GM13977 (cell line): ENCODE measurements at regions of chr1 and their contacts with region 1.

Region 1: DNA sequence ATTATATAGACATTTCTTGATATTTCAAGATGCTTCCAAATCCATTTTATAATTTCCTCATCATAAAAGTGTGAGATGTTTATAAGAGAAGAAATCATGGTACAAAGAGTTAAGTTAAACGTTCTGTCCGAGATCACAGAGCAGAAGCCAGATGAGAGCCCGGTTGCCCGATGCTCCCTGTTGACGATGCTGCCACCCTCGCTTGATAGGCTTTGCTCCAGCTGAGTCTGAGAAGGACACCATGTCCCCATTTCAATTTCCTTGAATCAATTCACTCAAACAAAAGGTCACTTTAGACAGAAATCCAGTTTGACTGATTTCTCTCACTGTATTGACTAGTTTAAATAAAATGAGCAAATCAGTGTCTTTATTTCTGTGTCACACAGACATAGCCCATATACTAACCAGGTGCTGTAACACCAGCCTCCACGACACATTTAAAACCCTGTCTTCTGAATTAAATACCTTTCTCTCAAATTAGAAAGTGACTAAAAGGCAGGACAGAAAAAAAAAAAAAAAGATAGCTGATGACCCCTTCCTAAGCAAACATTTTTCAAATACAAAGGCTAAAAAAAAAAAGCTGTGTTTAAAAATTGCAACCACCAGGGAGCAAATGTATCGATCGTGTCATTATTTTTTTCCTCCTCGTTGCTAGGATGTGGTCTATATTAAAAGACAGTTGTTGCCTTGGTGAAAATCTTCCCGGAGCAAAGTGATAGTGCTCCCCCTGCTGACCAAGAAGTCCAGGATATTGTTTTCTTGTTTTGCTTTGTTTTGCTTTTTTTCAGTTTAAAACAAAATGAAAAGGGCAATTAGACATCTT is 35.2 kb downstream of the DNASE2B start:
- DNase-seq: peak; percentile 38
- CTCF ChIP-seq: peak; percentile 72

Region 2: DNA sequence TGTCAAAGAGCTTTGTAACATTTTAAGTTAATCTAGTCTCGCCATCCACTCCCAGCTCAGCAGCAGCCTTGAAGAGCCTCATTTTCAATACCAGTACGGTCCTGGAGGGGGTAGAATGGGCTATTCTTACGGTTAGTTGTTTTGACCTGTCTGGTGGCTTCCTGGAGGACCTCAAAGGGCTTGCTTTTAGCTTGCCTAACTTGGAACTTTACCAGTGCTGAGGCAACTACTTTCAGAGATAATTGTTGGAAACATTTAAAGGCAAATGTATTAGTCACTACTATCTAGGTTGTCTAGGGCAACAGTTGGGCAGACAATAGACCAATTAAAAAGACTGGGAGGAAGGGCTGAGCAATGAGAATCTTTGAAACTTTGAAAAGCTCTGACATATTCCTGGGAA is 490.6 kb before region 1 on chr1:
- in situ Hi-C with region 1: loop called (anchors 10 kb)
- DNase-seq: no peak
- CTCF ChIP-seq: no peak

Region 3: GRCh38 chr1:84143796-84144565 is 289.5 kb before region 1 on chr1 and contains the start of gene PRKACB:
- in situ Hi-C with region 1: loop called (anchors 10 kb)
- DNase-seq: no peak
- CTCF ChIP-seq: no peak

Region 4: DNA sequence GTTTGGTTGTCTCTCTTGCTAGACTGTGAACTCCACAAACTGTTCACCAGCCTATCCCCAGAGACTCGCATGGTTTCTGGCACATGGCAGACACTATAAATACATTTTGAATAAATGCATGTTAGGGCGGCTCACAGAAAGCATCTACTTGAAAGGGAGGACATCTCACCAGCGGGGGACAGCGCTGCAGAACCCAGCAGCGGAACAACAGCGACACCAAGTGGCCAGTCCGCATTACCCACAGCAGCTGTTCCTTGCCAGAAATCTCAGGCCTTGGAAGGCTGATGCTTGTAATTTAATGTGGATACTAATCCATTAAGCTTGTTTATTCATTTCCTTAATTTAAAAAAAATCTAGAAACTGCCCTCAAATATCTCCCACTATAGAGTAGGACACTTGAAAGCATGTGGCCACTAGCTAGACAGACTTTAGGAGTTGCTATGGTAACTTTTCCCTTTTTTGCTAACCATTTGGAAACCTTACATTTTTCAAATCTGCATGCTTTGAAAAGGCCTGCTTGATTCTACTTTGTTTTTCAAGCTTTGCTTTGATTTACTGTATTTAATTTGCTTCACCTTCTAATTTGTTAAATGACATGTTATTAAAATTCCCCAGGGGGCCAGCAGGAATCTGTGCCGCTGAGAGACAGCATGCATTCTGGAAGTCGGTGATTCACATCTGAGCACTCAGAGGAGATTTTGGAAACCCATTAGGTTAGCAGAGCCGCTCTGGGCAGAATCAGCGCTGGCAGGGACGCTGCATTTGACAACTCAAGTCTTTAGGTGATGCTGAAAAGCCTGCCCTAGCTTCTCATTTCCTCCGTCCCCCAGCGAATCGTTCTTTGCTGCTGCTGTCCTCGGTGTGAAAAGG is 320.3 kb after region 1 on chr1:
- in situ Hi-C with region 1: loop called (anchors 10 kb)
- DNase-seq: peak; percentile 78
- CTCF ChIP-seq: peak; percentile 95